Spleen (tissue), 13 donors: ENCODE measurements at regions of chr6 and their contacts with region 1.

Region 1: GRCh38 chr6:28944412-28945006 is 20.7 kb upstream of the TRIM27 start:
- DNase-seq: no peak
- H3K4me3 ChIP-seq: peak overlapping the region; percentile 32 to 73 (median 50)
- H3K27ac ChIP-seq: peak overlapping the region; percentile 61 to 86 (median 81)
- H3K4me1 ChIP-seq: peaks cover 7 to 61% (median 37%) of the 10 kb centered on the region in 6 donors
- H3K27me3 ChIP-seq: no peaks in the 10 kb centered on the region
- CTCF ChIP-seq: no peak
- POLR2A ChIP-seq: no peak

Region 2: GRCh38 chr6:28981833-28982475 is 37.4 kb after region 1 on chr6:
- intact Hi-C with region 1: loop called (anchors 5 kb)
- DNase-seq: peak; percentile 77
- H3K4me3 ChIP-seq: peak overlapping the region; percentile 56 to 77 (median 66)
- H3K27ac ChIP-seq: peak overlapping the region; percentile 45 to 82 (median 78)
- H3K4me1 ChIP-seq: peaks cover 0 to 62% (median 35%) of the 10 kb centered on the region in 6 donors
- H3K27me3 ChIP-seq: peaks cover 0 to 41% (median 7%) of the 10 kb centered on the region in 7 donors
- CTCF ChIP-seq: peak in 7 of 11 experiments; percentile 15 to 50 (median 33)
- POLR2A ChIP-seq: peak in 1 of 3 donors; percentile 16